ENCODE measurements at regions of chr19 and their contacts with region 1.

Region 1: GRCh38 chr19:4803736-4804695 is 12.5 kb downstream of the FEM1A start:
- DNase-seq: peak; percentile 59
- H3K4me3 Mint-ChIP-seq: no peak overlapping the region
- H3K27ac Mint-ChIP-seq: no peak overlapping the region
- H3K4me1 Mint-ChIP-seq: no peaks in the 10 kb centered on the region
- H3K27me3 Mint-ChIP-seq: no peaks in the 10 kb centered on the region

Region 2: GRCh38 chr19:4732680-4733114 is 71.3 kb before region 1 on chr19:
- CTCF ChIA-PET with region 1: interaction called, 16 read pairs
- POLR2A ChIA-PET with region 1: no interaction called
- DNase-seq: peak; percentile 58
- H3K4me3 Mint-ChIP-seq: no peak overlapping the region
- H3K27ac Mint-ChIP-seq: no peak overlapping the region
- H3K4me1 Mint-ChIP-seq: peaks cover 12% of the 10 kb centered on the region
- H3K27me3 Mint-ChIP-seq: peaks cover 7% of the 10 kb centered on the region

Region 3: DNA sequence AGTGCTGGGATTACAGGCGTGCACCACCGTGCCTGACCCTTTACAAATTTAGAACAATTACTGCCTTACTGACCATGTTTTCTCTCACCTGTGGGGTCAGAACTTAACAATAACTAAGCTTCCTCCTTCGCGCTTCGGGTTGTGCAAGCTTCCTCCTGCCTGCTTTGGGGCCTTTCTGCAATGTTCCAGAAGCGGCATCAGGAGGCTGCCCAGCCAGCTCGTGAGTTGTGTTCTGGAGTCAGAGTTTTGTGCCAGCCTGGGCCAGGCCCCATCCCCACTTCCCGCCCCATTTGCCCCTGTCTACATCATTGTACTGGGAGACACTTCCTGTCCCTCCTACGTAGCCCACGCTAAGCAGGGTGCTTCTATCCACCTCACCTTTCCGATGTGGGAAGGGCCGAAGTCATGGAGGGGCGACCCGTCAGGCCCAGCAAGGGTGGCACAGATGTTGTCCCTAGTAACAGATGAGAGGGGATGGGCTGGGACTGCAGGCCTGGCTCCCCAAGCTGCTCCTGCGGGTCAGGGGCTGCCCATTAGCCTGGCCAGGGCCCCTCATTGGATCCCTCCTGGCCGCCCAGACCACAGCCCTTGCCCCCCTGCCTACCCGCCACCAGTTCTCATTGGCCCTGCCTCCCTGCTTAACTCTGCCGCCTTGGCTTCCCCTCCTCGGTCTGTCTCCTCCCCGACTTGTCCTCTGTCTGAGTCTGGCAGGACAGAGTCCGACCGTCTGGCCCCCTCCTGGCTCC is 118.7 kb after region 1 on chr19:
- CTCF ChIA-PET with region 1: no interaction called
- POLR2A ChIA-PET with region 1: no interaction called
- DNase-seq: no peak
- H3K4me3 Mint-ChIP-seq: no peak overlapping the region
- H3K27ac Mint-ChIP-seq: no peak overlapping the region
- H3K4me1 Mint-ChIP-seq: peaks cover 9% of the 10 kb centered on the region
- H3K27me3 Mint-ChIP-seq: no peaks in the 10 kb centered on the region

Measured in activated CD4-positive, alpha-beta memory T cell treated with anti-CD3 and anti-CD28 coated beads, Interleukin-2, amount 10 ng/mL, durations not matched to agents 7 days and 5 days (primary cell).